ENCODE measurements at regions of chr1 and their contacts with region 1.

Region 1: DNA sequence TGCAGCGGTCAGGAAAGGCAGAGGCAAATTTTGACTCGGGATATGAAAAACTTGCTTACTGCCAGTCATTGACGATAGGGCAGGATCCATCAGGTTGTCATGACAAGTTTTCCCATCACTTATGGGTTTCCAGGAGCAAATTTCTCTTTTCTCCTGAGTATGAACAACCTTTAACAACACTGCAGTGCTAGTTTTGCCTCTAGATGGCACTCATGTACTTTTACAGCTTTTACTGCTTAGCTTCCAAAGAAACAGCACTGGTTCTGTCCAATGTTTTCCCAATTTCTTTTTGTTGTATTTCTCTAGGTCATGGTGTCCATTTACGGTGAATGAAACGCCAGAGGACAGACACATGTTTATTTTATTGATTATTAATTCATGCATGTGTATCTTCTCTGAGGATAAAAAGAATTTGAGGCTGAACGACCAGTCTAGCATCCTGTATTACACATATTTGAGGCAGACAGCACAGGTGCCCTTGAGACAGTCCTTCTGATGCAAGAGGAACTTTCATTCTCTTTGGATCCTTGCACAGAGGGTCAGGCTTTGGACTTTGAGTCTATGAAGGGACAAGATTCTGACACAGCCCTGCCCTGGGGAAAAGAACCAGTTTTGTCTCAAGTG is 112.3 kb upstream of the TRABD2B start:
- H3K4me3 Mint-ChIP-seq: no peak overlapping the region
- H3K27ac Mint-ChIP-seq: no peak overlapping the region
- H3K4me1 Mint-ChIP-seq: no peaks in the 10 kb centered on the region
- H3K27me3 Mint-ChIP-seq: peaks cover 24% of the 10 kb centered on the region

Region 2: DNA sequence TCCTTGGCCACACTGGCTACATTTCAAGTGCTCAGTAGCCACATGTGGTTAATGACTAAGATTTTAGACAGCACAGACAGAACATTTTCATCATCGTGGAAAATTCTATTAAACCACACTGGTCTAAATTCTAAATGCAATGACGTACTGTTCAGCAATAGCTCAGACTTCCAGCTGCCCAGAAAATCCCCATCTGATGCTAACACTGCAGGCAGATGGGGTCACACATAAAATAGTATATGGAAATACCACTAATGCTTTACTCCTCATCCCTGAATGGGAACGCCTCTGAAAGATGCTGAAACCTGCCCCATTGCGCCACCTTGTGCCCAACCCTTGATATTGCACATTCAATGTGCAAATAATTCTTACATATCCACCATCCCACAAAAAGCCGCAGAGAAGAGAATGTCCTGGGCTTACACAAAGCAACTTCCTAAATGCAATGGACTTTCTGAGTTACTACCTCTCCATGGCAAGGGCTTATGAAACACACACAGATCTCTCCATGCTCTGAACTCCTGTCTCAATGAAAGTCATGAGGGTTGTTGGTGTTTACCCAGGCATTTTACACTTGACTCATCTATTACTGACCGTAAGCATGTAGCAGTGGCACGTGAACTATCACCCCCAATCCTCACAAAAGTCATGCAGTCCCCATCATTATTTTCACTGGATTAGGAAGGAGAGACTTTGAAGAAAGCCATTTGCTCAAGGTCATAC is 92.7 kb after region 1 on chr1:
- intact Hi-C with region 1: loop called (anchors 1 kb)
- H3K4me3 Mint-ChIP-seq: no peak overlapping the region
- H3K27ac Mint-ChIP-seq: no peak overlapping the region
- H3K4me1 Mint-ChIP-seq: no peaks in the 10 kb centered on the region
- H3K27me3 Mint-ChIP-seq: peaks cover 39% of the 10 kb centered on the region

Measured in dendritic cell treated with granulocyte-macrophage colony-stimulating factor and Interleukin-4, amounts not matched to agents 40 ng/mL and 50 ng/mL, for 4 days (primary cell).